ENCODE measurements at regions of chr7 and their contacts with region 1.

Region 1: DNA sequence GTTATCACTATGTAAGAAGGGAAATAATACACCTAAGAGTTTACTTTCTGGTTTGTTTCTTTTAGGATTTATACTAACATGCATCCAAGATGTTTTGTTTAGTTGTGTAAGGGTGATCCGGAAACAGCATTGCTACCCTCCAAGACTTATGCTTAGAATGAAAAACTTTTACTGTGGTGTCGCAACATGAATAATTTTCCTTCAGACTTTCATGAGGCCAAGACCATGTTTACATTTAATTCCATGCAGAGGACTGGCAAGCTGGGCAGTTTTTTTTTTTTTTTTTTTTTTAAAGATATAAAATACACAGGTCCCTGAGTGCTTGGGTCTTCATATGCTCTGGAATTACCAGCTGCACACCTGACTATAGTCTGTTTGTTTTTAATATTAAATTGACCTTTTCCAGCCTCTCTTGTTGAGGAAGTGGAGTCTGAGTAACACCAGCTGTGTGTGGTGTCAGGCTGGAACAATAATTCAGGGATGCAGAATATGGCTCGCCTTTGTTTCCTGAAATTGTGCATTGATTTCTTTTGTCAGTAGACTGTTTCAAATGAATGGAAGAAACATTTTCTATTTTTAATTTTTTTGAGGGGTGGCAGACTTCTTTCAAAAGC is 81.7 kb downstream of the ST7 start:
- DNase-seq: no peak
- ATAC-seq: no peak
- H3K4me3 Mint-ChIP-seq: no peak overlapping the region
- H3K27ac Mint-ChIP-seq: no peak overlapping the region
- H3K4me1 Mint-ChIP-seq: no peaks in the 10 kb centered on the region
- H3K27me3 Mint-ChIP-seq: no peaks in the 10 kb centered on the region
- CTCF ChIP-seq: no peak

Region 2: GRCh38 chr7:117023325-117023854 is 11.6 kb before region 1 on chr7:
- CTCF ChIA-PET with region 1: no interaction called
- POLR2A ChIA-PET with region 1: no interaction called
- intact Hi-C with region 1: loop called (anchors 2 kb)
- DNase-seq: no peak
- ATAC-seq: no peak
- H3K4me3 Mint-ChIP-seq: no peak overlapping the region
- H3K27ac Mint-ChIP-seq: no peak overlapping the region
- H3K4me1 Mint-ChIP-seq: peaks cover 3% of the 10 kb centered on the region
- H3K27me3 Mint-ChIP-seq: no peaks in the 10 kb centered on the region
- CTCF ChIP-seq: no peak

Region 3: GRCh38 chr7:117068511-117069145 is 33.7 kb after region 1 on chr7:
- CTCF ChIA-PET with region 1: no interaction called
- POLR2A ChIA-PET with region 1: no interaction called
- intact Hi-C with region 1: loop called (anchors 5 kb)
- DNase-seq: no peak
- ATAC-seq: no peak
- H3K4me3 Mint-ChIP-seq: no peak overlapping the region
- H3K27ac Mint-ChIP-seq: no peak overlapping the region
- H3K4me1 Mint-ChIP-seq: no peaks in the 10 kb centered on the region
- H3K27me3 Mint-ChIP-seq: no peaks in the 10 kb centered on the region
- CTCF ChIP-seq: no peak